GM10248 (cell line): ENCODE measurements at regions of chr6 and their contacts with region 1.

Region 1: GRCh38 chr6:145929037-145929633 is 35.0 kb downstream of the SHPRH start:
- DNase-seq: peak; percentile 16
- CTCF ChIP-seq: peak; percentile 48

Region 2: GRCh38 chr6:145508107-145508506 is 421.0 kb before region 1 on chr6:
- CTCF ChIA-PET with region 1: no interaction called
- POLR2A ChIA-PET with region 1: no interaction called
- DNase-seq: no peak
- CTCF ChIP-seq: no peak

Region 3: DNA sequence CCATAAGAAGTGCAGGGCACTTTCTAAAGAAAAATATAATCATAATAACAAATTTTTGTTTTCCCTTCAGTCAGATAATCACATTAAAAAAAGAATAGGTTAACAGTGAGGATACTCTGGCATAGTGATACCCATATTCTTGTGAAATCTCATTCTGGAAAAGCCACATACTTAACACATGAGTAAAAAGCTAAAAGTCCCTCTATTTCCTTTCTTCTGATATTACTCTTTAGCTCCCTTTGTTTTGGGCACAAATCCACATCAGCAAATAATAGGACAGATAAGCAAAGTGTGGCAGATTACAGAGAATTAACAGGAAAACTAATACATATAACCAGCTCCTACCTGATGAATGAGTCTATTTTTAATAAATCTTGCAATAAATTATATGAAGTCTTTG is 19.2 kb after region 1 on chr6:
- CTCF ChIA-PET with region 1: interaction called, 14 read pairs
- POLR2A ChIA-PET with region 1: no interaction called
- DNase-seq: no peak
- CTCF ChIP-seq: no peak

Region 4: GRCh38 chr6:145960918-145961589 is 31.9 kb after region 1 on chr6:
- CTCF ChIA-PET with region 1: interaction called, 12 read pairs
- POLR2A ChIA-PET with region 1: no interaction called
- DNase-seq: no peak
- CTCF ChIP-seq: no peak